ENCODE measurements at regions of chr17 and their contacts with region 1.

Region 1: DNA sequence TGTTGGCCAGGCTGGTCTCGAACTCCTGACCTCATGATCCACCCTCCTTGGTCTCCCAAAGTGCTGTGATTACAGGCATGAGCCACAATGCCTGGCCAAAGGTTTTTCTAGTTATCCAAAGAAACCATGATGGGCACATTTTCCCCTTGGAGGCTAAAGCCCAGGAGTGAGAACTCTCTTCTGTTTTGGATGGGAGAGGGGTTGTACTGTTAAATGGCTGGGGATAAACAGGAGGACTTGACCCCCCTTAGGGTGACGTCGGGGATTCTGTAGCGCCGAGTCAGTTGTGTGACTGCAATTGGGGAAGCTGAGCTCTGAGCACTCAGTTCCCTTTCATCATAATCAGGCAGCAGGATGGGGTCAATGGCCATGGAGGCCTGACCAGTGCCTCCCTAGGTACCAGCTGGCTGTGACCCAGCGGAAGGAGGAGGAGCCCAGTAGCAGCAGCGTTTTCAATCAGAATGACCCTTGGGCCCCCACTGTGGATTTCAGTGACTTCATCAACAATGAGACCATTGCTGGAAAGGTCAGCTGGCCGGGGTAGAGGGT is 4.1 kb downstream of the AOC3 start:
- DNase-seq: no peak
- H3K4me3 ChIP-seq: no peak overlapping the region
- CTCF ChIP-seq: no peak

Region 2: DNA sequence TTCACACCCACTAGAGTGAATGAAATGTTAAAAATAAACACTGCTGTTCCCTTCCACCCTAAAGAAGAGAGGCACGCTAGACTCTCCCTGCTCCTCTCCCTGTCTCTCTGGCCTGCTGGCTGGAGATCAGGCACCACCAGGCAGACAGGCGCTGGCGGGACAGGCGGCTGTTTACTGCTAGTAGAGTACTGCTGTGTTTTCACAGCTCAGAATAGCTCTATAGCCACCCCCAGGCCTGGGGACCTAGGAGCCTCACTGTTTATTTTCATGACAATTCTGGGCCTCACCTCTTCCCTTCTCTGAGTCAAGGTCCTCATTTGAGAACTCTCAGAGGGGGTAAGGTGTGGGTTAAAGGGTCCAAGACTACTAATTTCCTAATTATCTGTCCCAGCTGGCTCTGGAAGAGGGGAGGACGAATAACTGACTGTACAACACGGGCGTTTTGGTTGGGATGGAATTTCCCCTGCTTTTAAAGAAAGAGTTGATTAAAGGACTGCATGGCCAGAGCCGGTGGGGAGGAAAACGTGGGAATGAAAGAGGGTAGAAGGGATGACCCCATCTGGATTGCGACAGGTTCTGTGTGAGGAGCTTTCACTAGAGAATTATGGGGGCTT is 36.5 kb after region 1 on chr17:
- in situ Hi-C with region 1: loop called (anchors 5 kb)
- DNase-seq: no peak
- H3K4me3 ChIP-seq: no peak overlapping the region
- CTCF ChIP-seq: no peak

Region 3: DNA sequence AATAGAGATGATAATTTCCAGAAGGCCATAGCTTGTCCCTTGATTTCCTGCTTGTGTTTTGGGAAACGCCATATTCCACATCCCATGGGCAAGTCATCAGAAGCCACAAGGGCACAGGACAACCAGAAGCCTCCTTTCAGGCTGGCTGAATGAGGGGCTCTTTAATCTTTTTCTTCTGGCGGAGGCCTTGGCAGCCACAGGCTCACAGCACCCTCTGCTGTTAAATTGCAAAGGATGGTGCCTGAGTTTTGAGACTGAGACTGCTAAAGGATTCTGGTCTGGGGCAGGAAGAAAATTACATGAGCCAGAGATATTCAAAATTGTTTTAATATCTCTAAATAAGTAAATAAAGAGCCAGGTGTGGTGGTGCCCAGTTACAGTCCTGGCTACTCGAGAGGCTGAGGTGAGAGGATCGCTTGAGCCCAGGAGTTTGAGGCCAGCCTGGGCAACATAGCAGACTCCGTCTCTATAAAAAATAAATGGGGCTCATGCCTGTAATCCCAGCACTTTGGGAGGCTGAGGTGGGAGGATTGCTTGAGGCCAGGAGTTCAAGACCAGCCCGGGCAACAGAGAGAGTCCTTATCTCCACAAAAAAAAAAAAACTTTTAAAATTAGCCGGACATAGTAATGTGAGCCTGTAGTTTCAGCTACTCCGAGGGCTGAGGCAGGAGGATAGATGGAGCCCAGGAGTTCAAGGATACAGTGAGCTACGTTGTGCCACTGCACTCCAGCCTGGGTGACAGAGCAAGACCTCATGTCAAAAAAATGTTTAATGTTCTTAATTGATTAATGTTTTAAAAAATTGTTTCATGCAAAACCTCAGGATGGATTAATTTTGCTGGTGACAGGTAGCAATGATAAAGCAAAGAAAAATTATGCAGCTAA is 82.8 kb after region 1 on chr17:
- in situ Hi-C with region 1: no loop called
- DNase-seq: peak; percentile 36
- H3K4me3 ChIP-seq: no peak overlapping the region
- CTCF ChIP-seq: peak; percentile 76

Measured in astrocyte of the cerebellum (primary cell).